HEK293 (cell line): ENCODE measurements at regions of chr2 and their contacts with region 1.

Region 1: DNA sequence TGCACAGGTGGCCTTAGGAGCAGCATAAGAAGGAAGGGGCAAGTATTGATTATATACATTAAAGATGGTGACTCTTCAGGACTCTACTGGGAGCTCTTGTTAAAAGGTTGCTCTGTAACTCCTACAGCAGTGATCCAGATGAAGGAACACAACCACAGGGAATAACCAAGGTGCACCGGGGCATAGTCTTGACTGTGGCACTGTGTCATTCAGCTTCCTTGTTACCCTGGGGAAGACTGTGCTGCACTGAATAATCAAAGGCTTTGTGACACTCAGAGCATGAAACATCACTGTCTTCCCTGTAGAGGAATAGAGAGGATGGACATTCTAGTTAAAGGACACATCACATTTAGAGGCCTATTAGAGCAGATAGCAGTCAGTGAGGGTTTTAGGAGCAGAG is 105.3 kb downstream of the UBE2E3 start:
- H3K4me3 ChIP-seq: no peak overlapping the region
- H3K27ac ChIP-seq: no peak overlapping the region
- H3K4me1 ChIP-seq: no peaks in the 10 kb centered on the region
- CTCF ChIP-seq: no peak

Region 2: GRCh38 chr2:181411105-181411849 is 325.5 kb after region 1 on chr2:
- CTCF ChIA-PET with region 1: interaction called, 11 read pairs
- POLR2A ChIA-PET with region 1: no interaction called
- H3K4me3 ChIP-seq: no peak overlapping the region
- H3K27ac ChIP-seq: no peak overlapping the region
- H3K4me1 ChIP-seq: no peaks in the 10 kb centered on the region
- CTCF ChIP-seq: no peak